ENCODE measurements at regions of chr10 and their contacts with region 1.

Region 1: DNA sequence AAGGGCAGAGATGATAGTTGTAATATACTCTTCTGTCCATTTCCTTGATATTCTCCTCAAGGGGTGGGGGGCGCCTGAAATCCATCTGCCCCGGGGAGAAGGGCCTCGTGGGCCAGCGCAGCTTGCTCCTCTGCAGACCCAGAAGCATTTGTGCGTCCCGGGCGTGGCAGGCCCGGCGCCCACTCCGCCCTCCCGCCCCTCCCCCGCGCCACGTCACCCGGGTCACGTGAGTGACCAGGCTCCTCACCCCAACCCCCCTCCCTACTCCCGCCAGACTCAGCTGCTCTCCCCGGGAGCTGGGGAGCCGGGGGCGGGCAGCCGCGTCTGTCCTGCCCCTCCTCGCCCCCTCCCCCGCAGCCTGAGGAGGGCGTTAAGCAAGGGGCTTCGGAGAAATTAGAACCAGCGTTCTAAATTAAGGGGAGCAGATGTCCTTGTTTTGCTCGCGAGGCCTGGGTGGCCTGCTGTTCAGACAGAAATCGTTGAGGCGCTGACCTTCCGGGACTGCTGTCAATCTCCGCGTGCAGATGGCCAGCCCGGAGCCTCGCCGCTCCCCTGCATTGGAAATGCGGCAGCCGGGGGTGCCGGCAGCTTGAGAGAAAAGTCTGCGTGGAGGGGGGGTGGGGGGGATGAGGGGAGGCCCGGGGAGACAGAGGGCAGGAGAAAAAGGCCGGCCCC is 102.1 kb upstream of the ZNF438 start:
- DNase-seq: peak; percentile 45 to 85 (median 66)
- ATAC-seq: peak; percentile 63
- H3K4me3 ChIP-seq: peak overlapping the region; percentile 83
- H3K4me3 Mint-ChIP-seq: peak overlapping the region; percentile 84
- H3K27ac ChIP-seq: peak overlapping the region in 1 of 2 donors; percentile 45
- H3K27ac Mint-ChIP-seq: peak overlapping the region; percentile 86
- H3K4me1 ChIP-seq: peaks cover 41% of the 10 kb centered on the region
- H3K4me1 Mint-ChIP-seq: peaks cover 50% of the 10 kb centered on the region
- H3K27me3 ChIP-seq: no peaks in the 10 kb centered on the region
- H3K27me3 Mint-ChIP-seq: no peaks in the 10 kb centered on the region
- CTCF ChIP-seq: no peak

Region 2: DNA sequence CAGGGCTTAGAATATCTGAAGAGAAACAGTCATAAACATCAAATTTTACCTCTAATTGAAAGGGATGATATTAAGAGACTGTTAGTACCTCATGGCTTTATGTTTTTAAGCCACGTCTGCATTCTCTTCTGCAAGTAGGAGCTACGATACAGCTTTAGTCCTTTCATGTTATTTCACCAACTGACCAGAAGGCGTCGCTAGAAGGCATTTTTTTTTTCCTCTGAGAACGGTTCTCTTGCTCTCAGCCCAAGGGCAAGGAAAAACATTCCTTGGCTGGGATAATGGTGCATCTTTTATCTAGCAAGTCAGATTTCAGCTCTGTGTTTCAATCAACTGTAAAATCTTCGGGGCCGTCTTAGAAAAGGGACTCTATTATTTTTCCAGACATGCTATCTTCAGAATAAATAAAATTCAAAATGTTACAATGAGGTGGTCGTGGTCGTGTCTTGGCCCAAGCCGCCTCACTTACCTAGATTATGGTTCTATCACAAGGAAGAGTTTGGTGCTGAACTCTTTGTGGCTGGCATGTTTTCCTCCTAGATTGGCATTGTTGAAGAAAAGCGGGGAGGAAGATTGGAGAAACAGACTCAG is 462.6 kb before region 1 on chr10:
- CTCF ChIA-PET with region 1: no interaction called
- POLR2A ChIA-PET with region 1: no interaction called
- intact Hi-C with region 1: loop called in 1 of 2 experiments (anchors 10 kb)
- DNase-seq: peak in 4 of 14 experiments; percentile 49 to 79 (median 69)
- ATAC-seq: peak; percentile 75
- H3K4me3 ChIP-seq: peak overlapping the region; percentile 31
- H3K4me3 Mint-ChIP-seq: peak overlapping the region; percentile 65
- H3K27ac ChIP-seq: no peak overlapping the region
- H3K27ac Mint-ChIP-seq: no peak overlapping the region
- H3K4me1 ChIP-seq: no peaks in the 10 kb centered on the region
- H3K4me1 Mint-ChIP-seq: peaks cover 5% of the 10 kb centered on the region
- H3K27me3 ChIP-seq: peaks cover 0 to 13% of the 10 kb centered on the region in 2 experiments
- H3K27me3 Mint-ChIP-seq: peaks cover 22% of the 10 kb centered on the region
- CTCF ChIP-seq: peak; percentile 90